Left cardiac atrium (tissue), 4 donors: ENCODE measurements at regions of chr11 and their contacts with region 1.

Region 1: DNA sequence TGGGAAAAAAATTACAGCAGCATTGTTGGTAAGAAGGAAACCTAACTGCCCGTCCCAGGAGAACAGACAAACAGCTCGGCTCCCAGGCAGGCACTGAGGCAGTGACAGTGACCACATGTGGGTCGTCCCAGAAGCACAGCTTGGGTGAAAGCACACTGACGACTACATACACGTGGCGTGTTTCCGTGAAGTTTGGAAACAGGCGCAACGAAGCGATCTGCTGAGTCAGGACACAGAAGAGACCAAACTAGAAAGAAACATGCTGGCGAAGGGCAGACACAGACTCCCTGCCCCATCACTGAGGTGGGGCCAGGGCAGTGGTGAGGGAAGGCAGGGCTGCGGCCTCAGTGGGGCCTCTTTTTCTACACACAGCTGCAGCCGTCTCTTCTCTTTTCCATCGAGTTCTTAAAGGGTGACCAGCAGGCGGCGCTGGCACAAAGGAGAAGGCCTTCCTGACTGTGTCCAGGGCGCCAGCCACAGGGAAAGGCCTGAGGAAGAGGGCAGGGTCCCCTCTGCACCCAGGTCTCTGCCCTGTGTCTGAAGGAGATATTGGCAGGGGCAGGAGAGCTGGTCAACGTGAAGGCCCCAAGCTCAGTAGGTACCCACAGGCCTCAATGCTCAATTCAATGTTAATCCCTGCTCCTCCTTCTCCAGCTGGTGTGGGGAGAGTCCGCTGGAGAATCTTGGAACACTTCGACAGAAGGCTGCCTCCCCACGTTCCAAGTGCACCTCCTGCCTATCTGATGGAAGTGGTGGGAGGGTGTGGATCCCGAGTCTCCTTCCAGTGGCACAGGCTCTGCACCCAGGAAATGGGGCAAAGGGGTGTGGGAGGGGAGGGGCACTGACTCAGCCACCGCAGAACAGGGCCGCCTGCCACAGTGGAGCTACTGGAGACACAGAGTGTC is 19.9 kb downstream of the CARS1 start:
- DNase-seq: peak; percentile 87
- ATAC-seq: peak; percentile 76 to 82

Region 2: DNA sequence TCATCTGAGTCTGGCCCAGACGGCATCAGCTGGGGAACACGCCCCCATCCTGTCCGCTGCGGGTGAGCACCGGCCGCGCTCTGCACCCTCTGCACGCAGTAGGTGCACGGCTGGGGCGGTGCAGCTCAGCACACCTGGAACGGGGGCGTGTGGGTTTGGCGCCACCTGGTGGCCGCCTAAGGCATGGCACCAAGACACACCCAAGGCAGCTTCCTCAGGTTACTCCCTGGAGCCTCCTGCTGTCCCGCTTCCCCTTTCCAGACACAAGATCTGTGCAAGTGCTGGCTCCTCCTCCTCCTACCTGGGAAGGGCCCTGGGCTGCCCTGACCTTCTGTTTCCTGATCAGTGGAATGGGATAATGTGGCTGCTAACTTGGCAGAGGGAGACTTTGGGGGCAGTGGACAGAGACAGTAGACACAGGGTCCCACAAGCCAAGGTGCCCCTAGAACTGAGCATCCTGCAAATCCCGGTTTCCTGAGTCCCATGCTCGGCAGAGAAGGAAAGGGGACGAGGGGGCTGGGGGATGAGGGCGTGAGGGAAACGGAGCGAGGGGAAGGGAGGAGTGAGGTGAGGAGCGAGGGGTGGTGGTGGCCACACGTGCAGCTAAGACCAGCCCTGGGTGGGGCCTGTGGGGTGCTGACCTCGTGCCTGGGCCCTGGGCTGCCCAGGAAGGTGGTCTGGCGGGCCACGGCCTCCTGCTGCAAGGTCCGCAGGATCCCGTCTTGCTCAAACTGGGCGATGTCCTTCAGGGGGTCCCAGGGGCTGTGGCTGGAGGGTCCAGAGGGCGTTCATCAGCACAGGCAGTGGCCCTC is 54.7 kb after region 1 on chr11:
- intact Hi-C with region 1: loop called (anchors 1 to 2 kb)
- DNase-seq: peak; percentile 68
- ATAC-seq: peak; percentile 69 to 72